GM13976 (cell line): ENCODE measurements at regions of chr5 and their contacts with region 1.

Region 1: DNA sequence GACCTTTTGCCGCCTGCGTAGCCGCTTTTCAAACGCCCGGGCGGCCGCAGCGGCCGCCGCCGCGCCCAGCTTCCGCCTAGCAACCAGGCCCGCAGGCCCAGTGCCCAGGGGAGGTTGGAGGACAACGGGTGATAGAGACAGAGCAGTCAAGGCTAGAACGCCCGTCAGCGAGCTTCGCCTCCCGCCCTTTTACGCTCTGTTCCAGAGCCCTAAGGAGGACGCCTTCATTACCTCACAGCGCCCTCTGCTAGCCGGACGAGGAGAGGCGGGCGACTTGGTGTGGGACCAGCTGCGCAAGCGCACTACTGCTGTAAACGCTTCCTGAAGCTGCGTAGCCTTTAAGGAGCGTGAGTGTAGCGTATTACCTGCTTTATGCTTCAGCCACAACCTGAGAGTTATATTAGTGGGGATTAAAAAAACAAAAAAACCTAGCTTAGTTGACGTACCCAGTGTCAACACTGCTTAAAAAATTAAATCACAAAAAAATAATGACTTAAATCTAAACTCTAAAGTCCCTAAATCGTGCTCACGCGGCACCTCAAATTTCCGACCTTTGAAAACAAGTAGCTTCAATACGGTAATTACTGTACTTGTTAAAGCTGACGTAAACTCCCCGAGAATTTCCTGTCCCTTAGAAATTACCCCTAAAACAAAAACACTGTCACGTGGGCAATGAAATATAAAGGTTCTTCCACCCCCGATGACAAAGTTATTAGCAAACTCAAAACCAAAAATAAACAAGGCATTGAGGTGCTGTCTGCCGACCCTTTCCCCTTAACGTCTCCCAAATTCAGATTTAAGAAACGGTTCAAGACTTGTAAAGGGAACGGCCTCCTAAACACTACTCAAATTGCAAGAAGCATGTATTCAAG is at the start of gene CEP120:
- DNase-seq: peak; percentile 95
- CTCF ChIP-seq: peak; percentile 80

Region 2: GRCh38 chr5:123340926-123341325 is 82.6 kb before region 1 on chr5:
- in situ Hi-C with region 1: no loop called
- DNase-seq: no peak
- CTCF ChIP-seq: no peak

Region 3: DNA sequence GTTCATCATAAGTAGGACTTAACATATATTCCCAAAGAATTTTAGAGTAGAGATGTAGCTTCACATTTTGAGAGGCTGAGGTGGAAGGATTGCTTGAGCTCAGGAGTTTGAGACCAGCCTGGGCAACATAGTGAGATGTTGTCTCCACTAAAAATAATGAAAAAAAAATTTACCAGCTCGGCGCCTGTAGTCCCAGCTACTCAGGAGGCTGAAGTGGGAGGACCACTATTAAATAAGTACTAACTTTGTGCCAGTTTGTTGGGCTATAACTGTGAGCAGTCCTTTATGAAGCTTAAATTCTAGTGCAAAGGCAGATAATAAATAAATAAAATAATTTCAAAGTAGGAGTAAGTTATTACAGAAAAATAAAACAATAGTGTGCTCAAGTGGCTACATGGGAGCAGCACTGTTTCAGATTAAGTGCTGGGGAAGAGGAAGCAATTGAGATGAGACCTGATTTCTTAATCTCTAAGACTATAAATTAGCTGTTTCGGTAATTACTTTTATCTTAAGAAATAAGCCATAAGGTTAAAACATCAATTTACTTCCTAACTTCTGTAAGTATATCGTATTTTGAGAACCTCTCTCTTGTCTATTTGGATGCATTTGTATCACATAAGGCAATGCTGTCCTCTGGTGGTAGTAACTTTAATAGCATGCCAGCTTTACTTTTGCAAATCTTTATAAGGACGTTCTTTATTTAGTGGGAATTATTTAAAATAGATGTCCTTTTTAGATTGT is 187.3 kb after region 1 on chr5:
- in situ Hi-C with region 1: loop called (anchors 25 kb)
- DNase-seq: peak; percentile 25
- CTCF ChIP-seq: peak; percentile 77